Heart right ventricle (tissue), 16 donors: ENCODE measurements at regions of chr17 and their contacts with region 1.

Region 1: DNA sequence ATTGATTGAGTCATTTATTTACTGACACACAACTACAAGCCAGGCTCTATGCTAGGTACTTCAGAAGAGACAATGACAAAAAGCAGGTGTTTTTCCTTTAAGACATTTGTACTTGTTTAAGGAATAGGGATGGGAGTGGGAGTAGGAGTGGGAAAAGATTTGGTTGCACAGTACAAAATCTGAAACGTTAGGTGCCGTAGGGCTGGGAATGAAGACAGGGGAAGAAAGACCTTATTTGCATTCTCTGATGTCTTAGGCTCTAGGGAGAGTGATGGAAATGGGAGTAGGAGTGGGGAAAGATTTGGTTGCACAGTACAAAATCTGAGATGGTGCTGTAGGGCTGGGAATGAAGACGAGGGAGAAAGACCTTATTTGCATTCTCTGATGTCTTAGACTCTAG is 28.7 kb upstream of the OR4D1 start:
- DNase-seq: no peak
- ATAC-seq: no peak
- H3K4me3 ChIP-seq: no peak overlapping the region
- H3K27ac ChIP-seq: no peak overlapping the region
- H3K4me1 ChIP-seq: no peaks in the 10 kb centered on the region
- H3K27me3 ChIP-seq: peaks cover 0 to 15% (median 3%) of the 10 kb centered on the region in 7 donors
- CTCF ChIP-seq: no peak

Region 2: DNA sequence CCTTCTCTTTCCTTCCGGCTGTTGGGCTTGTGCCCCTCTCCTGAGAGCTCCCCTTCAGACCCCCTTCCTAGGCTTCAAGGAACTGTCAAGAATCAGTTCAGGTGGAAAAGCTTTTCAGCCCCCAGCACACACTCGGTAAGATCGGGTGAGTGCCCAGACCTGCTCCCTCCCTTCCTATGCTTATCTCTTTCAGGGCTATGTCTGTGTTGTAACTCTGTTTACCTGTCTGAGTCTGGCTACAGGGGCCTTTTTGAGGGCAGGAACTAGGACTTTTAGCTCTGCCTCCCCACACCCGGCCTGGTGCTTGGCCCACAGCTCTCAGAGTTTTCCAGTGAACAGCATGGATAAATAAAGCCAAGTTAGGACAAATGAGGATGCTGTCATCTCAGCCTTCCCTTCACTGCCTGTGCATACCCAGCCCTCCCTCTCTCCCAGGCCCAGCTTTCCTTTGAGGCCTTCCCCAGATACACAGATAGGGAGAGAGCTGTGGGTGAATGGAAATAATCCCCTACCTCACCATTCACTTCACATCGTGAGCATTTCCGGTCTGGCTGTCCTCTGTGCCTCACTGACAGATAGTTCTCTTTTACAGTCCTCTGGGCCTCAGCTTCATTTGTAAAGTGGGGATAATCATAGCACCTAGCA is 264.0 kb before region 1 on chr17:
- intact Hi-C with region 1: loop called in 7 of 10 experiments (anchors 2 to 10 kb)
- DNase-seq: no peak
- ATAC-seq: no peak
- H3K4me3 ChIP-seq: no peak overlapping the region
- H3K27ac ChIP-seq: peak overlapping the region in 5 of 10 donors; percentile 12 to 91 (median 47)
- H3K4me1 ChIP-seq: peaks cover 10 to 74% (median 33%) of the 10 kb centered on the region in 9 donors
- H3K27me3 ChIP-seq: no peaks in the 10 kb centered on the region
- CTCF ChIP-seq: no peak

Region 3: DNA sequence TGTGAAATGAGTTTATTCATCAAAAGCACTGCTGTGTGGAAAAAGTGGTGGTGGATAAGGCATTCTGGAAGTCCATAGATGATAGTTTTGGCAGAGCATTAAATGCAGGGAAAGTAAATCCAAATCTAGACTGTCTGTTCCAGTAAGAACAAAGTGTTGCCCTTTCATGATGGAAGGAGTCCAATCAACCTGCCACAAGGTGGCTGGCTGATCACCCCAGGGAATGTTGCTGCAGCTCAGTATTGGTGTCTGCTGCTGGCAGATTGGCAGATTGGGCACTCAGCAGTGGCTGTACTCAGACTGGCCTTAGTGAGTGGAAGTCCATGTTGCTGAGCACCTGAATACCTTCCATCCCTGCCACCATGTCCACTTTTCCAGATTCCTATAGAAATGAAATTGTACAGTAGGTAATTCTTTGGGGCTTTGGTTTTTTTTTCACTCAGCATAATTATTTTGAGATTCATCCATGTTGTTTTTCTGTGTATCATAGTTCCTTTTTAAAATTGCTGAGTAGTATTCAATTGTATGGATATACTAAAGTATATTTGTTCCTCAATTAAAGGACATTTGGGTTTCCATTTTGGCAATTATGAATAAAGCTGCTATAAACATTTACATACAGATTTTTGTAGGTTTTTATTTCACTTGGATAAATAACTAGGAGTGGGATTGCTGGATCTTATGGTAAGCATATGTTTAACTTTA is 22.0 kb before region 1 on chr17:
- intact Hi-C with region 1: loop called in 1 of 10 experiments (anchors 2 kb)
- DNase-seq: no peak
- ATAC-seq: peak in 1 of 8 donors; percentile 44
- H3K4me3 ChIP-seq: no peak overlapping the region
- H3K27ac ChIP-seq: no peak overlapping the region
- H3K4me1 ChIP-seq: no peaks in the 10 kb centered on the region
- H3K27me3 ChIP-seq: no peaks in the 10 kb centered on the region
- CTCF ChIP-seq: no peak

Region 4: DNA sequence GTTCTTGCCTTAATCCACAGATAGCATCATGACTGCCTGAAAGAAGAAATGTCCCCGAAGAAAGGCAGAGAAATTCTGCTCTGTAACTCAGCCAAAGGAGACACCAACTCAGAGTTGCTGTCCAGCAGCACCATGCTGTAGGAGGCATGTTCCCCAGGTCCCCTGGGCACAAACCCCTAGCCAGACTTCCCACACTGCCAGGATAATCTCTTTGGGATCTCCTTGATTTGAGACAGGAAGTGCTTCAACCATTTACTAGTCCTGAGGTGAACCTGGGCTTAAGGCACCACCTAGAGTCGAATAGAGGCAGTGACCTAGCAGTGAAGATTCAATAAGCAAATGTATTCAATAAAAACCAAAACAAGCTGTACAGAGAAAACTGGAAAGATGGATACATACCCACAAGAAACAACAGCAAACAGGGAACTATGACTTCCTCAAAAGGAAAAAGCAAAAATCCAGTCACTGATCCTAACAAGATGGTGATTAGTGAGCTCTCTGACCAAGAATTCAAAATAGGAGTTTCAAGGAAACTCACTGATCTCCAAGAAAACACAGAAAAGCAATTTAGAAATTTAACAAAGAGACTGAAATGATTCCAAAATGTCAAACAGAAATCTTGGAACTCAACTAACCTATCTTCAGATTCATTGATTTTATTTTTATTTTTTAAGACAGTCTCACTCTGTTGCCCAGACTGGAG is 53.0 kb after region 1 on chr17:
- intact Hi-C with region 1: loop called in 2 of 10 experiments (anchors 2 to 5 kb)
- DNase-seq: no peak
- ATAC-seq: no peak
- H3K4me3 ChIP-seq: no peak overlapping the region
- H3K27ac ChIP-seq: no peak overlapping the region
- H3K4me1 ChIP-seq: no peaks in the 10 kb centered on the region
- H3K27me3 ChIP-seq: peaks cover 0 to 50% (median 29%) of the 10 kb centered on the region in 7 donors
- CTCF ChIP-seq: peak in 6 of 9 donors; percentile 26 to 52 (median 41)